ENCODE measurements at regions of chr6 and their contacts with region 1.

Region 1: DNA sequence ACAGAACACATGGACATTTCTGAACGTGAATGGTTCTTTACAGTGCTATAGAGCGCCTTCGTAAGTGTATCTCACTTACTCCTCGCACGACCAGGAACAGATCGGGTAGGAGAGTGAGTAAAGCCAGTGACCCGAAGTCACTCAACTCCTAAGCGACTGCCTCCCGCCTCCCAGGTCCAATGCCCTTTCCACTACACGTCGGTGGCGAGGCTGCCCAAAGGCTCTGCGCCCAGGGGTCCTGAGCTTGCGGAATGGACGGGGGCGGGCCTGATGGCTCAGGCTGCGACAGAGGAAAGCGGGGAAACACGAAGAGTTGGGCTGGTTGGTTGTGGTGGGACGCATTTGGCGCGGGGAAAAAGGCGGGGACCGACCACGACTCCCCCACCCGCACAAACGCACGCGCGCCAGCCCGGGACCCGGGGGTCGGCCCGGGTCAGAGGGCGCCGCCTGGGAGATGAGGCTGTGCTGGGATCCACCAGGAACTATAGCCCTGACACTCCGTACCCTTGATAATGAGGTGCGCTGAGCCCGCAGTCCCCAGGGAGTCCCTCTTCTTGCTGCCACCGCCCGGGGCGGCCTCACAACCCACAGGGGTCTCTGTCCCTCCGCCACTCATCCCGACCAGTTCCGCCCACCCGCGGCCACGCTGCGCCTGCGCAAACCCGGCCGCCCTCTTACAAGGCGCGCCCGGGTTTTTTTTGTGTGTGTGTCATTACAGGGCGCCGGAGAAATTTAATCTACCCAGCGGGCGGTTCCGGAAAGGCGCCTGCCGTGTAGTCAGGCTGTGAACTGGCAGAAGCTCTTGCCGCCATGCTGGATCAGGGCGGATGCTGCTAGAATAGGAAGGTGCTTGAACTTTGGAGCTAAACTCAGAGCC is at the start of gene BLOC1S5:
- DNase-seq: peak; percentile 97
- total RNA-seq, gene BLOC1S5: 10.8 TPM

Region 2: DNA sequence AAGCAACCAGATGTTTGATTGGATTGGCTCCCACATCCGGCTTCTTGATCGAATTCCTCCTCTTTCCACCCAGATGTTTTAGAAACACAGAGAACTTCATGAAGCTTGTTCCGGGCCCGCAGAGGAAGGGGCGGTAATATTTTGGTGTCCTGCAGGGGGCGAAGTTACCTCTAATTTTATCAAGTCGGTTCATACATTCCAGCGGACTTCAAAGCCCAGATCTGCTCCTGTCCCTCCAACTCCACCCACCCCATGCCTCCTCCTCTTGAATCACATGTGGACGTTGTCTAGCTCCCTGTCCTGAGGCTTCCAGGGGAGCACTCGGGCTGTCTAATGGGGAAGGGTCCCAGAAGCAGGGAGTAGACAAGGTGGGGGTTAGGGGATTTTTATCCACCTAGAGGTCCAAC is 341.0 kb before region 1 on chr6:
- intact Hi-C with region 1: loop called (anchors 2 kb)
- DNase-seq: peak; percentile 88

Region 3: GRCh38 chr6:7910654-7911344 is 153.2 kb before region 1 on chr6 and contains the start of gene TXNDC5:
- intact Hi-C with region 1: loop called (anchors 5 kb)
- DNase-seq: peak; percentile 90
- total RNA-seq, gene TXNDC5: 50.8 TPM

Region 4: DNA sequence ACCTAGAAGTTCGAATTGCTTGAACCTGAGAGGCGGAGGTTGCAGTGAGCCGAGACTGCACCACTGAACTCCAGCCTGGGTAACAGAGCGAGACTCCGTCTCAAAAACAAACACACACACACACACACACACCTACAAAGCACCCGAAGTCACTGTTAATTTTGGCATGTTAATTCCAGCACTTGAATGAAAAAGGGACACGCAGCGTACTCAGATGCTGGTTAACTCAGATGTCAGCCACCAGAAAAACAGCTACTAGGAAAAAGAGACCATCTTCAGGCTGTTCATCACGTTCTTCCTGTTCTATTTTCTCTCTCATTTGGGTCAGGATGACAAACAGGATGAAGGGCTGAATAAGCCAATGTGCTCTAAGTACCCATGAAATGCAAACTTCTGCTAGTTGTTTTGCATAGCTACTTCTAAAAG is 46.7 kb before region 1 on chr6:
- intact Hi-C with region 1: loop called (anchors 5 kb)
- DNase-seq: no peak

Region 5: GRCh38 chr6:8102122-8102958 is 38.3 kb after region 1 on chr6 and contains the start of gene EEF1E1:
- intact Hi-C with region 1: loop called (anchors 5 kb)
- DNase-seq: peak; percentile 97
- total RNA-seq, gene EEF1E1: 15.9 TPM